Activated CD4-positive, alpha-beta memory T cell treated with anti-CD3 and anti-CD28 coated beads for 36 hours (primary cell): ENCODE measurements at regions of chr7 and their contacts with region 1.

Region 1: GRCh38 chr7:34823640-34824258 is 165.7 kb downstream of the NPSR1 start:
- DNase-seq: peak; percentile 68
- H3K4me3 Mint-ChIP-seq: no peak overlapping the region
- H3K27ac Mint-ChIP-seq: no peak overlapping the region
- H3K4me1 Mint-ChIP-seq: no peaks in the 10 kb centered on the region
- H3K27me3 Mint-ChIP-seq: no peaks in the 10 kb centered on the region

Region 2: GRCh38 chr7:34806831-34807230 is 16.9 kb before region 1 on chr7:
- CTCF ChIA-PET with region 1: no interaction called
- POLR2A ChIA-PET with region 1: no interaction called
- intact Hi-C with region 1: no loop called
- DNase-seq: no peak
- H3K4me3 Mint-ChIP-seq: no peak overlapping the region
- H3K27ac Mint-ChIP-seq: no peak overlapping the region
- H3K4me1 Mint-ChIP-seq: no peaks in the 10 kb centered on the region
- H3K27me3 Mint-ChIP-seq: peaks cover 15% of the 10 kb centered on the region

Region 3: DNA sequence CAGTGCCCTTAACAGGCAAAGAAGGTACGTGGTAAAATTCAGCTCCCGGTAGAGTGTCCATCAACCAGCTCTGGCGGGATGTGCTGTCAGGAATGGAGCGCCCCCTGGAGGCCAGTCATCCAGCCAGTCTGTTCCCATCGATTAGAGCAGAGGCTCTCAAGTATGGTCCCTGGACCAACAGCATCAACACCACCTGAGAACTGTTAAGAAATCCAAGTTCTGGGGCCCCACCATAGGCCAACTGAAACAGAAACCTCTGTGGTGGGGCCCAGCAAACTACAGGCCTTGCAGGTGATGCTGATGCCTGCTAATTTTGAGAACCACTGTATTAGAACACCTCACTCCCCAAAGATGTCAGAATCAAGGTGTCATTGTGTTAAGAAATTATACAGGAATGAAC is 104.3 kb after region 1 on chr7:
- CTCF ChIA-PET with region 1: interaction called, 5 read pairs
- POLR2A ChIA-PET with region 1: no interaction called
- intact Hi-C with region 1: loop called (anchors 2 kb)
- DNase-seq: peak; percentile 63
- H3K4me3 Mint-ChIP-seq: no peak overlapping the region
- H3K27ac Mint-ChIP-seq: no peak overlapping the region
- H3K4me1 Mint-ChIP-seq: peaks cover 3% of the 10 kb centered on the region
- H3K27me3 Mint-ChIP-seq: no peaks in the 10 kb centered on the region